ENCODE measurements at regions of chr10 and their contacts with region 1.

Region 1: GRCh38 chr10:68331455-68332258 is at the start of gene HNRNPH3:
- DNase-seq: peak; percentile 97 to 99
- H3K4me3 ChIP-seq: peak within 1 kb of the TSS; percentile 95 to 99 (median 98)
- H3K27ac ChIP-seq: peak within 1 kb of the TSS; percentile 99
- H3K4me1 ChIP-seq: peaks cover 0 to 5% (median 4%) of the 10 kb centered on the region in 4 experiments; a peak in 4 of 7 replicates
- H3K27me3 ChIP-seq: no peaks in the 10 kb centered on the region; a peak in 1 of 7 replicates
- CTCF ChIP-seq: no peak
- EP300 ChIP-seq: no peak
- POLR2A ChIP-seq: peak; percentile 98 to 100
- RAD21 ChIP-seq: 0 out of 4 replicates have a peak, but pooled peaks of 1 of the 2 experiments have one; percentile 0
- total RNA-seq, gene HNRNPH3: 229 and 230 TPM in 2 replicates

Region 2: GRCh38 chr10:68223535-68224165 is 108.0 kb before region 1 on chr10:
- CTCF ChIA-PET with region 1: interaction called, 5 read pairs
- POLR2A ChIA-PET with region 1: interaction called, 64 read pairs
- DNase-seq: peak in 1 of 2 experiments; percentile 58
- H3K4me3 ChIP-seq: no peak overlapping the region
- H3K27ac ChIP-seq: no peak overlapping the region
- H3K4me1 ChIP-seq: no peaks in the 10 kb centered on the region
- H3K27me3 ChIP-seq: no peaks in the 10 kb centered on the region
- CTCF ChIP-seq: peak; percentile 58 to 77 (median 67)
- EP300 ChIP-seq: no peak
- POLR2A ChIP-seq: no peak
- RAD21 ChIP-seq: peak; percentile 67 to 77

Region 3: DNA sequence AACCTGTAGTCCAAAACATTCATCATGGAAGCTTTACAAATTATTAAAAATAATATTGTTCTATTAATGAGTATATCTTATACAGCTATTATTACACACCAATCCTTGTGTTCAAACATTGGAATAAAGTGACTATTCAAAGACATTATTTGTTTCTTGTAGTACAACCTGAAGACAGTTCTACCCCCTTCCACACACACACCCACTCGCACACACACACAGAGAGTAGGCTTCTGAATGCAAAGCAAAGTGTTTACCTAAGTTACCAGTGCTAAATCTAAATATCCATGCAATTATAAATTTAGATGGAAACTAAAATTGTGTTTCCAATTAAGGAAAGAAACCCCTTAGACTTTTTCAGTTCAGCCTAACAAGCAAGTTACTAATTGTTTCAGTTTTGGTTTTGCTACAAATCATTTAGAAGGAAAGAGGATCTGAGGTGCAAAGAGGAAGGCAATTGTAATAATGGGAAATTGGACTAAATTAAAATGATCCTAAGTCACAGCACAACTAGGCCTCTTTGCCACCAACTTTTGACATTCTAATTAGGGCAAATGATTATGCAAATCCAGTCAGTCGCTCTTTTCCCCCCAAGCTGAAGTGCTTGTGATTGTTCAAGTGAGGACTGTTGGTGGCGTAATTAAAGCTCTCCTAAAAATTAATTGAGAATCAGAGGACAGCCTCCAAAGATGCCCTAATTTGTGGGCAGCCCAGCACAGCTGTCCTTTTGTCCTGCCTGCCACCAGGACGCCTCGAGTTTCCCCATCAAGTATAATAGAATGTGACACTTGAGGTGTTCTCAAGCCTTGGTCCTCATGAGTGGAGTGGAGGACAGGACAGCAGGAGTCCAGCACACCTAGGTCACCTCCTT is 79.8 kb before region 1 on chr10:
- CTCF ChIA-PET with region 1: interaction called, 7 read pairs
- POLR2A ChIA-PET with region 1: interaction called, 27 read pairs
- DNase-seq: no peak
- H3K4me3 ChIP-seq: no peak overlapping the region
- H3K27ac ChIP-seq: no peak overlapping the region
- H3K4me1 ChIP-seq: peaks cover 0 to 11% (median 6%) of the 10 kb centered on the region in 4 experiments; a peak in 3 of 7 replicates
- H3K27me3 ChIP-seq: no peaks in the 10 kb centered on the region
- CTCF ChIP-seq: no peak
- EP300 ChIP-seq: no peak
- POLR2A ChIP-seq: no peak
- RAD21 ChIP-seq: no peak

Region 4: DNA sequence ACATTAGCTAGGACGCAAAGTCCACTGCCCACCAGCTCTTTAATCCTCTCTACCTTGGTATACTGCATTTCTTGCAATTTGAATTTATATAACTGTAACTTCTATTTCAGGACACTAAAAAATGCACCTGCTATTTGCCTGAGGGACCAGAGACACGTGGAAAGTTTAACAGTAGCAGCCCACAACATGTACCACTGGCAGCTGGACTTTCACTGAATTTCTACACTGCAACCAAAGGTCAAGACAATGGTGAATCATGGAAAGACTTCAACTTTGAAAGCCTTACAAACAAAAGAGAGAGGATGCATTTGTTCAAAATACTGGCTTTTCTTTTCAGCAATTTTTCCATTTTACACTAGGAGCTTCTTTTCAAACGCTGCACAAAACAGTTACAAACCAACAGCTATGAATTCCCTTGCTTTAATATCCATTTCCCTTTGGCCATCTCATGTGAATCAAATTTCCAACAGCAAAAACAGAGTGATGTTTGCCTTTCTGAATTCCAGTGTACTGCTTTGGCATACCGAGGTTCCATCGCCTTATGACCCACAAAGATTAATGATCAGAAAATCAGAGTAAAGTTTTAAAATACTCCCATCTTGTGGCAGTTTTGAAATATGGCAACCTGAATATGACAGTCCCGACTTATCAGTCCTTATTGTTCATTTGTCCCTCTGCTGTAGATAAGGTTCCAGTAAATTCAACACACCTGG is 29.7 kb before region 1 on chr10:
- CTCF ChIA-PET with region 1: interaction called, 6 read pairs
- POLR2A ChIA-PET with region 1: interaction called, 15 read pairs
- DNase-seq: no peak
- H3K4me3 ChIP-seq: no peak overlapping the region
- H3K27ac ChIP-seq: no peak overlapping the region
- H3K4me1 ChIP-seq: peaks cover 0 to 3% (median 0%) of the 10 kb centered on the region in 4 experiments; a peak in 1 of 7 replicates
- H3K27me3 ChIP-seq: no peaks in the 10 kb centered on the region
- CTCF ChIP-seq: peak in 2 of 3 experiments; percentile 37 to 48; a peak in 2 of 4 replicates
- EP300 ChIP-seq: no peak
- POLR2A ChIP-seq: no peak
- RAD21 ChIP-seq: peak; percentile 64 to 67

Region 5: GRCh38 chr10:68348265-68348741 is 16.6 kb after region 1 on chr10:
- CTCF ChIA-PET with region 1: interaction called, 6 read pairs
- POLR2A ChIA-PET with region 1: interaction called, 141 read pairs
- DNase-seq: no peak
- H3K4me3 ChIP-seq: no peak overlapping the region
- H3K27ac ChIP-seq: no peak overlapping the region
- H3K4me1 ChIP-seq: peaks cover 0 to 2% (median 0%) of the 10 kb centered on the region in 4 experiments; a peak in 1 of 7 replicates
- H3K27me3 ChIP-seq: no peaks in the 10 kb centered on the region
- CTCF ChIP-seq: peak; percentile 59 to 92 (median 73)
- EP300 ChIP-seq: no peak
- POLR2A ChIP-seq: no peak
- RAD21 ChIP-seq: peak; percentile 57 to 74

Region 6: DNA sequence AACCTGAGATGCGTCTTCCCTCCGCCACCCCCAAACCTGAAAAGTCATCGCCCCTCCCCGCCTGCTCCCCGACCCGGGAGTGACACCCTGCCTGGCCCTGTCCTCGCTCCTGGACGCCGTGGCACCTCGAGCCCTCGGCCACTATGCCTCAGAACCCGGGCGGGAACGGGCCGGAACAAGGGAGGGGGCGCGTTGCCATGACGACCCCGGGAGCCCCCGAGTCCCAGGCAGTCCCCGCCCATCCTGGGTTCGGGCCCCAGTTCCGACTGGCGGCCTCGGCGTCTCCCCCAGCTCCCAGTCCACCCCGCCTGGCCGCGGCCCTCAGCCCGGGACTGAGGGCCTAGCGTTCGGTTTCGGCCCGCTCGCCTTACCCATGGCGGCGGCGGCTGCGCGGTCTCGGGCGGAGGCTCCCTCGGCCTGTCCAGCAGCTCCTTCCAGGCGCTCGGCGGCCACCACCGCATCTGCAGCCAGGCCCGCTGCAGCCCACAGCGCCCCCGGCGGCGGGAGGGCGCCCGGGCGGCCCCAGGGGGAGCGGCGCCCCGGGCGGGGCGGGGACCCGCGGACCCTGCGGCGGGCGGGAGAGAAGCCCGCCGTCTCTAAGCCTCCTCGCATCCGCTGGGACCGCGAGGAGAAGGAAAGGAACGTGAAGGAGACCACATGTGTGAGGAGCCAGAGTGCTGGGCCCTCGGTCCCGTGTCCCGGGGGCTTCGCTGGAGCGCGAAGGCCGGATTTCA is 75.3 kb after region 1 on chr10 and contains the start of gene RUFY2:
- CTCF ChIA-PET with region 1: no interaction called
- POLR2A ChIA-PET with region 1: interaction called, 17 read pairs
- DNase-seq: peak; percentile 34 to 91
- H3K4me3 ChIP-seq: peak within 1 kb of the TSS; percentile 72 to 86 (median 74)
- H3K27ac ChIP-seq: peak within 1 kb of the TSS; percentile 88
- H3K4me1 ChIP-seq: peaks cover 0 to 4% (median 0%) of the 10 kb centered on the region in 4 experiments; a peak in 2 of 7 replicates
- H3K27me3 ChIP-seq: no peaks in the 10 kb centered on the region
- CTCF ChIP-seq: peak; percentile 77 to 90 (median 83)
- EP300 ChIP-seq: no peak
- POLR2A ChIP-seq: peak; percentile 21 to 59; a peak in 2 of 3 replicates
- RAD21 ChIP-seq: peak in 1 of 2 experiments; percentile 26; a peak in 1 of 4 replicates
- total RNA-seq, gene RUFY2: 11.4 and 12.0 TPM in 2 replicates

Measured in H1 (cell line).